Ascending aorta (tissue), 2 donors: ENCODE measurements at regions of chr2 and their contacts with region 1.

Region 1: DNA sequence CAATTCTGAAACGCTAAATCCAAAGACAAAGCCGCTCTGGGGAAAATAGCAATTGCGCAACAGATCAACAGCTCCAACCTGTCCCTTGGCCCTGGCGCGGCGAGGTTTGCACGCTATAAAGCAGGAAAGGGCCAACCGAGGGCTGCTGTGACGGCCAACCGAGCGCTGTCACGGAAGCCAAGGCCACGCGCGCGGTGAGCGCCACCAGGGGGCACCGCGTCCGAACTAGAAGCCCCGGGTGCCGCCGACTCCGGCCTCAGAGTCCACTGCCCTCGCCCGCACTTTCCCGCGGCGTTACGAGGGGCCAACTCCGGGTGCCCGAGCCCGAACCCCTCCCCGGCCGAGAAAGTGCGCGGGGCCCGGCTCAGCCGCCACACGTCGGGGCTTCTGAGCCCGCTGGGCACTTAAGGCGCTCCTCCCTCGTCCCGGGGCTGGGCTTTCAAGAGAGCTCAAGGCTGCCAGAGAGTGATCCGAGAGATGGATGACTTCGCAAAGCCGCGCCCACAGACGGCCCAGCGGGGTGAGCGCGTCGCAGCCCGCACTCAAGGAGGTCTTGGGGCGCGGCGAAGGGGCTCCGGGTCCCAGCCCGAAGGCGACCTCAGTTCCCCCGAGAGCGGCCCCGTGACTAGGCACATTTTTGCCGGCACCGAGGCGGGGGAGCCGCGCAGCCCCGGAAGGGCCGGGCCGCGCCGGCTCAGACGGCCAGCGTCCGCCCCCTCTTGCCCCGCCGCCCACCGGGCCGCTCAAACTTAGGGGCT is 897 bp downstream of the NFE2L2 start:
- DNase-seq: peak; percentile 87 to 99
- H3K4me3 ChIP-seq: peak overlapping the region; percentile 76 to 97
- H3K27ac ChIP-seq: peak overlapping the region; percentile 99 to 100
- H3K4me1 ChIP-seq: peaks cover 5 to 30% of the 10 kb centered on the region in 2 donors
- H3K27me3 ChIP-seq: no peaks in the 10 kb centered on the region
- CTCF ChIP-seq: peak; percentile 86 to 94 (median 93)

Region 2: DNA sequence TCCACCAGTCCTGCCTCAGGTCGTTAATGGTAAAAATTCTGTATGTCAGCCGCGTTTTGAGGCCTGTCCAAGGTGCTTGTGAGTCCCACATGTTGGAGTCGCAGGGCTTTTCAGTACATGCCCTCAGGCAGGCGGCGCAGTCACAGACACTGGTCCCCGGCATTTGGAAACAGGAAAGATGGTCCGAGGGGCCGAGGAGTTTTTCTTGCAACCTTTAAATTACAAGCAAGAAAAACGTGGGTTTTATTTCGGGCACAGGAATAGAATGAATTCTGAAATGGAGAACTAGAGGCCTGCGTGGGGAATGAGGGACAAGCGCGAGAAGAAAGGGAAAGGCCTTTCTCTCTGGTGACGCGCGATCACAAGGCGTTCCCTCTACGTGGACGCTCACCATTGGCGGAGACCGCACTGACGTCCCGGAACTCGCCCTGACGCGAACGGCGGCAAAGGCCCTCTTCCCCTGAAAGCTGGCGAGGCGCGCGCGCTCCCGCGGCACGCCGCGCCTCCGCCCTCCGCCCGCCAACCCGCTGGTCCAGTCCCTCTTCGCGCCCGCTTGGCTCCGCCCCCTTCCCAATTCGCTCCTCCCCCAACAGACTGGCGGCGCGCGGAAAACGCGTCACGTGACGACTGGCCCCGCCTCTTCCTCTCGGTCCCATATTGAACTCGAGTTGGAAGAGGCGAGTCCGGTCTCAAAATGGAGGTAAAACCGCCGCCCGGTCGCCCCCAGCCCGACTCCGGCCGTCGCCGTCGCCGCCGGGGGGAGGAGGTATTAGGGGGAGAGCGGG is 51.3 kb before region 1 on chr2 and contains the start of gene HNRNPA3:
- intact Hi-C with region 1: loop called (anchors 1 kb)
- DNase-seq: peak; percentile 96 to 99
- H3K4me3 ChIP-seq: peak within 1 kb of the TSS; percentile 78 to 99
- H3K27ac ChIP-seq: peak within 1 kb of the TSS; percentile 97 to 100
- H3K4me1 ChIP-seq: peaks cover 20 to 35% of the 10 kb centered on the region in 2 donors
- H3K27me3 ChIP-seq: no peaks in the 10 kb centered on the region
- CTCF ChIP-seq: peak; percentile 10 to 32 (median 11)
- total RNA-seq, gene HNRNPA3: 32.9 TPM

Region 3: DNA sequence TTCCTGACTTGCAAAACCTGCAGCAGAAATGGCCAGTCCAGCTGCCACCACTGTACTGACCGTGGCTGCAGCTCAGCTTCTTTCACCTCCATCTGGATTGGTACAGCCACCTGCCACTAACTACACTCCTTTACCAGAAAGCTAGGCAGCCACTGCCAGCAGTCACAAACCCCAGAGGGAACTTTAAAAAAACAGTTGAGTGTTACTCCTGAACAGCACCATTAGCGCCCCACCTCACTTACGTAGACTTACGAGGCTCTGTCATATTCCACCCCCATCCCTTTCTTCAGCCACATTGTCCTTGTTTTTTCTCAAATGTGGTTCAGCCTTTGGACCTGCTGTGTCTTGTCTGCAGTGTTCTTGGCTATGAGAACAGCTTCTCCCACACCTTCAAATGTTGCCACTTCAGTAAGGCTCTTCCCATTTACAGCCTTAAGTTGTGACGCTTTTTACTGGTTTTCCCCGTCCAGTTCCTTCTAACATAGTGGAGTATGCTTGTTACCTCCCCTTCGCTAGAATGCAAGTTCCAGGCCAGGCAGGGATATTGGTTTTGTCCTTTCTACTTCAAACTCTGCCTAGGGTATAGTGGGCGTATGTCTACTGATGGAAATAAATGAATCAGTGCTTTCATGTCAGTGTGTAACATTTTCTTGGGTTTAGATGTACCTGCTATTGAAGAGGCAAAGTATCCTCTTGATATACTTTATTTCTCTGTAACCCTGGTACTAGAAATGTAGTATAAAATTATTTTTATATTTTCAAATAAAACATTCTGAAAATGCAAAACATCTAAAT is 34.0 kb before region 1 on chr2:
- intact Hi-C with region 1: loop called (anchors 5 kb)
- DNase-seq: no peak
- H3K4me3 ChIP-seq: no peak overlapping the region
- H3K27ac ChIP-seq: peak overlapping the region in 1 of 2 donors; percentile 30
- H3K4me1 ChIP-seq: peaks cover 3 to 4% of the 10 kb centered on the region in 2 donors
- H3K27me3 ChIP-seq: no peaks in the 10 kb centered on the region
- CTCF ChIP-seq: no peak

Region 4: GRCh38 chr2:177242116-177242987 is 21.3 kb before region 1 on chr2:
- intact Hi-C with region 1: loop called (anchors 1 kb)
- DNase-seq: no peak
- H3K4me3 ChIP-seq: peak overlapping the region; percentile 23 to 34
- H3K27ac ChIP-seq: peak overlapping the region; percentile 90 to 94
- H3K4me1 ChIP-seq: peaks cover 30 to 86% of the 10 kb centered on the region in 2 donors
- H3K27me3 ChIP-seq: no peaks in the 10 kb centered on the region
- CTCF ChIP-seq: no peak

Region 5: GRCh38 chr2:177275041-177276020 is 11.7 kb after region 1 on chr2:
- intact Hi-C with region 1: loop called (anchors 1 kb)
- DNase-seq: no peak
- H3K4me3 ChIP-seq: peak overlapping the region; percentile 27 to 46
- H3K27ac ChIP-seq: peak overlapping the region; percentile 65 to 79
- H3K4me1 ChIP-seq: peaks cover 0 to 21% of the 10 kb centered on the region in 2 donors
- H3K27me3 ChIP-seq: no peaks in the 10 kb centered on the region
- CTCF ChIP-seq: no peak

Region 6: DNA sequence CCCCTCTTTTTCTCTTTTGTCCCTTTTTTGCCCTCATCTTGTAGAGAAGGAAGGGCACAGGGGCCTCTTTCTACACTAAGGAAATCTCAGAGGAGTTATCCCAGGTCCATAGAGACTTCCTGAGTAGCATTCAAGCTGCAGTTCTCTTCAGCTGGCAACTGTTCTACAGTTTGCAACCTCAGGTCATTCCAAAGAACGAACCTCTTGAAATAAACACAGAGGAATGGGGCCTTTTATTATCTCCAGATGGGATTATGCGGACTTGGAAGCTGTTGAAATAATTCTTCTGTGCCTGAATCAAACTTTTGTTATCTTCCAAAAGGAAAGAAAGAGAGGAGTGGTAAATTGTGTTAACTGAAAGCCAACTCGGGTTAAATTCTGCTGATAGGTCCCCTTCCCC is 31.9 kb after region 1 on chr2:
- intact Hi-C with region 1: loop called (anchors 1 kb)
- DNase-seq: no peak
- H3K4me3 ChIP-seq: peak overlapping the region; percentile 11 to 37
- H3K27ac ChIP-seq: peak overlapping the region; percentile 66 to 74
- H3K4me1 ChIP-seq: peaks cover 0 to 7% of the 10 kb centered on the region in 2 donors
- H3K27me3 ChIP-seq: no peaks in the 10 kb centered on the region
- CTCF ChIP-seq: no peak